IMR-90 (cell line): ENCODE measurements at regions of chr7 and their contacts with region 1.

Region 1: GRCh38 chr7:7761340-7761980 is 43.1 kb upstream of the RPA3 start:
- DNase-seq: peak; percentile 66
- ATAC-seq: no peak
- H3K4me3 ChIP-seq: no peak overlapping the region
- H3K27ac ChIP-seq: no peak overlapping the region
- H3K4me1 ChIP-seq: no peaks in the 10 kb centered on the region; the same call in 1 of the 2 replicates
- H3K27me3 ChIP-seq: no peaks in the 10 kb centered on the region
- CTCF ChIP-seq: peak; percentile 50
- POLR2A ChIP-seq: no peak
- RAD21 ChIP-seq: peak; percentile 48

Region 2: DNA sequence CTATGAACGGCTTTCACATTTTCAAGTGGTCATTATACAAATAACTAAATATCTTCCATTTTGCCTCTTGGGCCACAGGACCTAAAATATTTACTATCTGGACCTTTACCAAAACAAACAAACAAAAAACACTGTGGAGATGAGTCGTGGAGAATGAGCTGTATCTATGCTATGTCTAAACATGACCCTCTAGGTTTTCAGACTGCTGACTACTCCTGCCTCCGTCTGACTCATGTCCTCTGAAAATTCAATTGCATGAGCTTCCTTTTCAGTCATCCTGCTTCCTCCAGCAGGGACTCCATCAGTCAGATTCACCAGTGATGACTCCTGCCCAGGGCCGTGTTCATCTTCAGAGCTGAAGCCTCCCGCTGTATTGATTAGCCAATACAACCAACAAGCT is 322.6 kb before region 1 on chr7:
- CTCF ChIA-PET with region 1: no interaction called
- POLR2A ChIA-PET with region 1: no interaction called
- dilution Hi-C with region 1: no loop called
- in situ Hi-C with region 1: loop called (anchors 25 kb)
- intact Hi-C with region 1: no loop called
- DNase-seq: peak; percentile 99
- ATAC-seq: peak; percentile 97
- H3K4me3 ChIP-seq: no peak overlapping the region
- H3K27ac ChIP-seq: peak overlapping the region; percentile 78
- H3K4me1 ChIP-seq: peaks cover 8% of the 10 kb centered on the region
- H3K27me3 ChIP-seq: no peaks in the 10 kb centered on the region
- CTCF ChIP-seq: no peak
- POLR2A ChIP-seq: no peak
- RAD21 ChIP-seq: no peak

Region 3: DNA sequence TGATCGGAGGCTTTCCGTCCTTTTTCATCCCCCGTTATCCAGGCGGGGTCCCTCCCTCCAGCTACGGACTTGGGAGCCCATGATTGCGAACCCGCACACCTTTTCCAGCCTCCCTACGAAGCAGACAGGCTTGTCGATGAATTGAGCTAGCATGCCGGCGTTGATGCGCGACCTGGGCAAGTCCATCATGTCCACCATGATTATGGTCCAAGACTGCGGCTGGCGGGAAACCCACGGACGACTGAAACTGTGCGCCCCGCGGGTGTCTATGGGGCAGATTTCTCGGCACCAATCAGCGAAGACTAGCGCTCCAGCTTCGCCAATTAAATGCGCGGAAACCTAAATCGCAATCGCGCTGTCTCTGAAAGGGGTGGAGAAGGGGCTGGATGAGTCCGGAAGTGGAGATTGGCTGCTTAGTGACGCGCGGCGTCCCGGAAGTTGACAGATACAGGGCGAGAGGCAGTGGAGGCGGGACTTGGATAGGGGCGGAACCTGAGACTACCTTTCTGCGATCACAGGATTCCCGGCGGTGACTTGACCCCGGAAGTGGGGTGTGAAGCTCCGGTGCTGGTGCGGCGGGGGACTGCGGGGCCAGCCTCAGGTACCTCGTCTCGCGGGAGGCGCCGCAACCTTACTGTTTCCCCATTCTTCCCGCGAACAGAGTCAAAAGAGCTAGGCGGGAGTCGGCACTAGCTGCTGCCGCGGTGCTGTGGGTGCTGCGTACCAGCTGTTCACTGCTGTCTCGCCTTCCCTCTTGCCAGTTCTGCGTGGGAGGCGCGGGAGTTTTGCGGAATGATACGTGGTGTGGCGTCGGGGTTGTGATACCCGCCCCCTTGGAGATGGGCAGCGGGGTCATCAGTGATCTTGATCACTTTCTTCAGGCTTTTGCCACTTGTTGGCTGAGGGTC is 121.0 kb before region 1 on chr7 and contains the start of gene UMAD1:
- CTCF ChIA-PET with region 1: no interaction called
- POLR2A ChIA-PET with region 1: no interaction called
- dilution Hi-C with region 1: no loop called
- in situ Hi-C with region 1: no loop called
- intact Hi-C with region 1: loop called (anchors 5 kb)
- DNase-seq: peak; percentile 98
- ATAC-seq: peak; percentile 97
- H3K4me3 ChIP-seq: peak within 1 kb of the TSS; percentile 78
- H3K27ac ChIP-seq: peak within 1 kb of the TSS; percentile 58
- H3K4me1 ChIP-seq: no peaks in the 10 kb centered on the region
- H3K27me3 ChIP-seq: no peaks in the 10 kb centered on the region
- CTCF ChIP-seq: no peak
- POLR2A ChIP-seq: peak; percentile 79; the same call in 1 of the 2 replicates
- RAD21 ChIP-seq: no peak
- total RNA-seq, gene UMAD1: 5.2 and 9.2 TPM in 2 replicates

Region 4: DNA sequence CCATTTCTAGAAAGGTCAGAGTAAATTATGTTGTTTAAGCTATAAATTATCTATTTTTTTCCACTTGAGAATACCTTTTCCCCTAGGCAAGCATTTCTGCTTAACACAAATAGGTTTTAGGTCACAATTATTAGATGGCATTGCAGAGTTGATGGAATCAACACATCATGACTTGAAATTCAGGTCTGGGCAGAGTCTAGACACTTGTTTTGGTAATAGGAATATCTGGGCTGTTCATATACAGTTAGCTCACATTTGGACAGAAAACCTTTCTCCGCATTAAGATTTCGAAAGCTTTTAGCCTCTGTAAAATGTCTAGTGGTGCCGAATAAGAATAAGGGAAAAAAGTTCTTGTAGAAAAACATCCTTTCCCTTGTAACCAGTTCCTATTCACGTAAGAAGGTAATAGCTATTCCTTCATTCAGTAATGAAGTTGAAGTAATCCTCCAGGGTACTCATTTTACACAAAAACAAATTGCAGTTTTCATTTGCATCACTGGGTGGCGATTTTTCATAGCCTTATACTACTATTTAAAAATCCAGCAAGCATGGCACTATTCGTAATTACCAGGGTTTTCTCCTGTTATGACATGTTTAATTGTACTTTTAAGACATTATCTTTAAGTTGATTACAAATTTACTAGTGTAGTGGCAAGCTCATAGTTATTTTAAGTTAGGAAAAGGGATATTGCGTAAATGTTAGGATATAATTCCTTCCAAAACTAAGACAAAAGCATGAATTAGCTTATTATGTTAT is 80.1 kb before region 1 on chr7:
- CTCF ChIA-PET with region 1: interaction called, 12 read pairs
- POLR2A ChIA-PET with region 1: no interaction called
- dilution Hi-C with region 1: no loop called
- in situ Hi-C with region 1: loop called (anchors 5 kb)
- intact Hi-C with region 1: loop called (anchors 1 kb)
- DNase-seq: peak; percentile 61
- ATAC-seq: peak; percentile 89
- H3K4me3 ChIP-seq: no peak overlapping the region
- H3K27ac ChIP-seq: no peak overlapping the region
- H3K4me1 ChIP-seq: no peaks in the 10 kb centered on the region
- H3K27me3 ChIP-seq: no peaks in the 10 kb centered on the region
- CTCF ChIP-seq: peak; percentile 76
- POLR2A ChIP-seq: no peak
- RAD21 ChIP-seq: peak; percentile 78

Region 5: GRCh38 chr7:7696458-7697119 is 64.9 kb before region 1 on chr7:
- CTCF ChIA-PET with region 1: interaction called, 4 read pairs
- POLR2A ChIA-PET with region 1: no interaction called
- dilution Hi-C with region 1: no loop called
- in situ Hi-C with region 1: no loop called
- intact Hi-C with region 1: loop called (anchors 5 kb)
- DNase-seq: peak; percentile 51
- ATAC-seq: peak; percentile 53; the same call in 1 of the 2 replicates
- H3K4me3 ChIP-seq: no peak overlapping the region
- H3K27ac ChIP-seq: no peak overlapping the region
- H3K4me1 ChIP-seq: peaks cover 4% of the 10 kb centered on the region; the same call in 1 of the 2 replicates
- H3K27me3 ChIP-seq: no peaks in the 10 kb centered on the region
- CTCF ChIP-seq: no peak
- POLR2A ChIP-seq: no peak
- RAD21 ChIP-seq: no peak

Region 6: GRCh38 chr7:7968543-7969305 is 207.3 kb after region 1 on chr7 and contains the start of gene GLCCI1:
- CTCF ChIA-PET with region 1: interaction called, 3 read pairs
- POLR2A ChIA-PET with region 1: no interaction called
- dilution Hi-C with region 1: no loop called
- in situ Hi-C with region 1: no loop called
- intact Hi-C with region 1: loop called (anchors 2 kb)
- DNase-seq: peak; percentile 95
- ATAC-seq: peak; percentile 97
- H3K4me3 ChIP-seq: peak within 1 kb of the TSS; percentile 80
- H3K27ac ChIP-seq: peak within 1 kb of the TSS; percentile 80
- H3K4me1 ChIP-seq: peaks cover 4% of the 10 kb centered on the region; the same call in 1 of the 2 replicates
- H3K27me3 ChIP-seq: no peaks in the 10 kb centered on the region
- CTCF ChIP-seq: no peak
- POLR2A ChIP-seq: peak; percentile 67
- RAD21 ChIP-seq: peak; percentile 7; the same call in 1 of the 2 replicates
- total RNA-seq, gene GLCCI1: 4.1 and 7.8 TPM in 2 replicates

Region 7: GRCh38 chr7:8217200-8218068 is 456.0 kb after region 1 on chr7:
- CTCF ChIA-PET with region 1: no interaction called
- POLR2A ChIA-PET with region 1: no interaction called
- dilution Hi-C with region 1: no loop called
- in situ Hi-C with region 1: no loop called
- intact Hi-C with region 1: loop called (anchors 1 kb)
- DNase-seq: peak; percentile 73
- ATAC-seq: peak; percentile 83
- H3K4me3 ChIP-seq: no peak overlapping the region
- H3K27ac ChIP-seq: no peak overlapping the region
- H3K4me1 ChIP-seq: no peaks in the 10 kb centered on the region
- H3K27me3 ChIP-seq: no peaks in the 10 kb centered on the region
- CTCF ChIP-seq: peak; percentile 70
- POLR2A ChIP-seq: no peak
- RAD21 ChIP-seq: peak; percentile 70